Right lobe of liver (tissue), 6 donors: ENCODE measurements at regions of chr14 and their contacts with region 1.

Region 1: GRCh38 chr14:49892636-49893308 is at the start of gene ARF6:
- DNase-seq: peak; percentile 99 to 100 (median 99)
- ATAC-seq: peak; percentile 93 to 97 (median 96)
- H3K4me3 ChIP-seq: peak within 1 kb of the TSS; percentile 94 to 99 (median 98)
- H3K27ac ChIP-seq: peak within 1 kb of the TSS; percentile 99 to 100 (median 99)
- H3K4me1 ChIP-seq: peaks cover 0 to 38% (median 10%) of the 10 kb centered on the region in 4 donors
- H3K27me3 ChIP-seq: no peaks in the 10 kb centered on the region
- CTCF ChIP-seq: peak in 2 of 4 donors; percentile 23 to 36
- POLR2A ChIP-seq: peak; percentile 98
- total RNA-seq, gene ARF6: 21.1 to 41.4 (median 32.4) TPM

Region 2: GRCh38 chr14:49999216-49999761 is 106.5 kb after region 1 on chr14:
- intact Hi-C with region 1: loop called in 1 of 2 experiments (anchors 10 kb)
- DNase-seq: peak; percentile 68 to 84 (median 73)
- ATAC-seq: peak in 3 of 4 donors; percentile 9 to 45 (median 42)
- H3K4me3 ChIP-seq: no peak overlapping the region
- H3K27ac ChIP-seq: peak overlapping the region; percentile 90 to 95 (median 90)
- H3K4me1 ChIP-seq: peaks cover 0 to 38% (median 17%) of the 10 kb centered on the region in 4 donors
- H3K27me3 ChIP-seq: no peaks in the 10 kb centered on the region
- CTCF ChIP-seq: no peak
- POLR2A ChIP-seq: peak; percentile 66